OCI-LY7 (cell line): ENCODE measurements at regions of chr9 and their contacts with region 1.

Region 1: GRCh38 chr9:137411671-137412380 is 11.1 kb downstream of the EXD3 start:
- DNase-seq: no peak
- H3K4me3 ChIP-seq: no peak overlapping the region
- H3K27ac ChIP-seq: no peak overlapping the region
- H3K4me1 ChIP-seq: peaks cover 8% of the 10 kb centered on the region
- CTCF ChIP-seq: no peak

Region 2: DNA sequence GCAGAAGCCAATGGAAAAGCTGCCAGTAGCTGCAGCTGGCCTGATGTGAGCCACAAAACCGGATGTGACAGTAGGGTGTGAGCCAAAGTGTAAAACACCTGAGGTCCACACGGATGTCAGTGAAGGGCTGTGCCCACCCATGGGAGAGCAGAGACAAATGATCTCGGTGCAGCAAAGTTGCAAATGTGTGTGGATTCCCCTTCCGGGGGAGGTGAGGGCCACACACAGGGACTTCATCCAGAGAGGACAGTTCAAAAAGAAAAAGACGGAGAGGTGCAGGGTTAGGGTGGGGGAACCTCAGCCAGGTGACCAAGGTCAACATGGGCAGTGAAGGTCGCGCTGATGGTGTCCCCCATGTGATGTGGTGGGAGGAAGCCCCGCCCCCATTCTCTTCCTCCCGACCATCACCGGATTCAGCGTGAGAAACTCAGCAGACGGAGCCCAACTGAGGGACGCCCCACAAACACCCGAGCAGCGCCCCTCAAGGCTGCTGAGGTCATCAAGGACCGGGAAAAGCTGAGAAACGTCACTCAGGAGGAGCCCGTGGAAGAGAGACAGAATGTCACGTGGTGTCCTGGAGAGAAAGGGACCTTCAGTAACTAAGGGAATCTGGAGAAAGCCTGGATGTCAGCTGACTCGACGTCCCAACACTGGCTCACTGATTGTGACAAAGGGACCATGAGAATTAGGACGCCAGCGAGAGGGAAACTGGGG is 445.9 kb before region 1 on chr9:
- CTCF ChIA-PET with region 1: no interaction called
- POLR2A ChIA-PET with region 1: no interaction called
- intact Hi-C with region 1: no loop called
- DNase-seq: peak; percentile 24
- H3K4me3 ChIP-seq: peak overlapping the region; percentile 1
- H3K27ac ChIP-seq: no peak overlapping the region
- H3K4me1 ChIP-seq: peaks cover 8% of the 10 kb centered on the region
- CTCF ChIP-seq: no peak

Region 3: GRCh38 chr9:137320555-137321384 is 91.1 kb before region 1 on chr9:
- CTCF ChIA-PET with region 1: no interaction called
- POLR2A ChIA-PET with region 1: no interaction called
- intact Hi-C with region 1: loop called (anchors 10 kb)
- DNase-seq: peak; percentile 93
- H3K4me3 ChIP-seq: peak overlapping the region; percentile 57
- H3K27ac ChIP-seq: peak overlapping the region; percentile 73
- H3K4me1 ChIP-seq: peaks cover 37% of the 10 kb centered on the region
- CTCF ChIP-seq: no peak

Region 4: GRCh38 chr9:137499416-137499815 is 87.6 kb after region 1 on chr9:
- CTCF ChIA-PET with region 1: no interaction called
- POLR2A ChIA-PET with region 1: no interaction called
- intact Hi-C with region 1: no loop called
- DNase-seq: no peak
- H3K4me3 ChIP-seq: no peak overlapping the region
- H3K27ac ChIP-seq: no peak overlapping the region
- H3K4me1 ChIP-seq: no peaks in the 10 kb centered on the region
- CTCF ChIP-seq: no peak